ENCODE measurements at regions of chr12 and their contacts with region 1.

Region 1: GRCh38 chr12:94020335-94020734 is 128.0 kb upstream of the PLXNC1 start:
- DNase-seq: no peak
- H3K4me3 Mint-ChIP-seq: no peak overlapping the region
- H3K27ac Mint-ChIP-seq: no peak overlapping the region
- H3K4me1 Mint-ChIP-seq: no peaks in the 10 kb centered on the region
- H3K27me3 Mint-ChIP-seq: no peaks in the 10 kb centered on the region

Region 2: DNA sequence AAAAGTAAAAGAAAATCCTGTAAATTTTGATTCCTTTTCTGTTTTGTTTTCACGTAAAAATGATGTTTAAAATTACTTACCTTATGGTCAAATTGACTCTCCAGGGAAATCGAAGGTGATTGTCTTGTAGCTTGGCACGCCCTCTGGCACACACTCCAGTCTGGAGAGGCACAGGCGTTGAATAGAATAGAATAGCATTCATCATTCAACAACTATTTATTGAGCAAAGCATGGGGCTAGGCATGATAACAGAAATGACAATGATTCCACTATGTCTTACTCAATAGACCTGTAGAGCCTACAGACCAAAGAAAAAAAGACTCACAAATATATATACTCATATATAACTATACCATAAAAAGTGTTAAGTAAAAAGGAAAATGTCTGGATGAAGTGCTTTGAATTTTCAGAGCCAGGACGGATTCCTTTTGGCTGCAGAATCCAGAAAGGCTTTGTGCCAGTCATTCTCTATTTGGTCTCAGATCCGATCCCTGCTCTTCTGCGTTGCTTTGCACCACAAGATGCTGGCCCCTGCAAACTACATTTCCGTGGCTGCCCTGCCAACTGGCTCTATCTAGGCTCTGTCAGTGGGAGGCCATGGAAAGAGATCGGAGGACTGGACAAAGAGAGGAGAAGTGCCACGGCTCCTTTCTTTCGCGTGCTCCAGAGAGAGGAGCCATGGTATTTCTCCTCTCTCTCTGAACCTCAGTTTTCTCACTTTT is 111.3 kb before region 1 on chr12:
- CTCF ChIA-PET with region 1: no interaction called
- intact Hi-C with region 1: no loop called
- DNase-seq: no peak
- H3K4me3 Mint-ChIP-seq: no peak overlapping the region
- H3K27ac Mint-ChIP-seq: no peak overlapping the region
- H3K4me1 Mint-ChIP-seq: no peaks in the 10 kb centered on the region
- H3K27me3 Mint-ChIP-seq: no peaks in the 10 kb centered on the region

Region 3: GRCh38 chr12:93938931-93939330 is 81.4 kb before region 1 on chr12:
- CTCF ChIA-PET with region 1: no interaction called
- intact Hi-C with region 1: no loop called
- DNase-seq: no peak
- H3K4me3 Mint-ChIP-seq: no peak overlapping the region
- H3K27ac Mint-ChIP-seq: no peak overlapping the region
- H3K4me1 Mint-ChIP-seq: no peaks in the 10 kb centered on the region
- H3K27me3 Mint-ChIP-seq: no peaks in the 10 kb centered on the region

Region 4: GRCh38 chr12:94033101-94033500 is 12.8 kb after region 1 on chr12:
- CTCF ChIA-PET with region 1: interaction called, 3 read pairs
- intact Hi-C with region 1: loop called (anchors 2 kb)
- DNase-seq: peak; percentile 22
- H3K4me3 Mint-ChIP-seq: no peak overlapping the region
- H3K27ac Mint-ChIP-seq: peak overlapping the region; percentile 50
- H3K4me1 Mint-ChIP-seq: peaks cover 40% of the 10 kb centered on the region
- H3K27me3 Mint-ChIP-seq: no peaks in the 10 kb centered on the region

Measured in activated naive CD4-positive, alpha-beta T cell treated with anti-CD3 and anti-CD28 coated beads for 36 hours (primary cell).